ENCODE measurements at regions of chr17 and their contacts with region 1.

Region 1: DNA sequence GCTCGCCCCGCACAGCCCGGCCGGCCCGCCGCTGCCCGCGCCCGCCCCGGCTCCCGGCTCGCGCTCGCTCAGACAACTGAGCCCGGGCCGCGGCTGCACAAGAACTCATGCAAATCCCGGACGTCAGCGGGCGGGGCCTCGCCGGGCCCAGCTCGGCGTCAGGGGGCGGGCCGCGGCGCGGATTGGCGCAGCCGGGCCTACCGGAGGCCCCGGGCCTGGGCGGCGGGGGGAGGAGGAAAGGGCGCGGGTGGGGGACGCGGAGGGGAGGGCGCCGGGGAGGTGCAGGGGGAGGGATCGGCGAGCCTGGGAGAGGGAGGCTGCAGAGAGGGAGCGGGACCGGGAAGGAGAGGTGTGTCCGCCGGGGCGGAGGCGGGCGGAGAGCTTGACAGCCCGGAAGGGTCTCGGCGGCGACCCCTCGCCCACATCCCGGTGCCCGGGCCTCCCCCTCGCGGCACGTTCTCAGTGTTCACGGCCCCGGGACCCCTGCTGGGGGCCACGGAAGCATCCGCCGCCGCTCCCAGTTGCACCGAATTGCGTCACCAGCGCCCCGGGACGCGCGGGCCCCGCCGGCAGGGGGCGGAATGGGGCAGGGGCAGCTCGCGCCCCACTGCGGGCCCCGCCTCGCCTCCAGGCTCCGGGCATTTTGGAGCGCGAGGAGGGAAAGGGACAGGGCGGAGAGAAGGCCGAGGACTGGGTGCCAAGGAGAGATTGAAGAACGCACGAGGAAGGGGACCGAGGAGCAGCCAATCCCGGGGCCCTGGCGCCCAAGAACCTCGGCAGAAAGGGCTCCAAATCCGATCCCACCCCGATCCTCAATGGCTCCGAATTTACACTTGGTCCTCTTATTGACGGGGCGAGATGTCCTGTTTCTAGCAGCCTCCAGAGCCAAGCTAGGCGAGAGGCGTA is at the start of gene CBX4:
- DNase-seq: peak; percentile 91
- ATAC-seq: peak; percentile 24
- H3K4me3 Mint-ChIP-seq: peak within 1 kb of the TSS; percentile 72
- H3K27ac Mint-ChIP-seq: no peak within 1 kb of the TSS; the same call in 1 of the 2 replicates
- H3K4me1 Mint-ChIP-seq: peaks cover 31% of the 10 kb centered on the region
- H3K27me3 Mint-ChIP-seq: peaks cover 89% of the 10 kb centered on the region
- CTCF ChIP-seq: peak; percentile 57
- total RNA-seq, gene CBX4: 3.2 to 3.9 TPM (median 3.3 TPM) in 3 replicates

Region 2: GRCh38 chr17:79747508-79748295 is 91.9 kb before region 1 on chr17:
- CTCF ChIA-PET with region 1: interaction called, 64 read pairs
- POLR2A ChIA-PET with region 1: no interaction called
- DNase-seq: peak; percentile 61
- ATAC-seq: peak; percentile 21; the same call in 1 of the 2 replicates
- H3K4me3 Mint-ChIP-seq: peak overlapping the region; percentile 75
- H3K27ac Mint-ChIP-seq: no peak overlapping the region
- H3K4me1 Mint-ChIP-seq: peaks cover 15% of the 10 kb centered on the region
- H3K27me3 Mint-ChIP-seq: peaks cover 81% of the 10 kb centered on the region
- CTCF ChIP-seq: no peak

Region 3: DNA sequence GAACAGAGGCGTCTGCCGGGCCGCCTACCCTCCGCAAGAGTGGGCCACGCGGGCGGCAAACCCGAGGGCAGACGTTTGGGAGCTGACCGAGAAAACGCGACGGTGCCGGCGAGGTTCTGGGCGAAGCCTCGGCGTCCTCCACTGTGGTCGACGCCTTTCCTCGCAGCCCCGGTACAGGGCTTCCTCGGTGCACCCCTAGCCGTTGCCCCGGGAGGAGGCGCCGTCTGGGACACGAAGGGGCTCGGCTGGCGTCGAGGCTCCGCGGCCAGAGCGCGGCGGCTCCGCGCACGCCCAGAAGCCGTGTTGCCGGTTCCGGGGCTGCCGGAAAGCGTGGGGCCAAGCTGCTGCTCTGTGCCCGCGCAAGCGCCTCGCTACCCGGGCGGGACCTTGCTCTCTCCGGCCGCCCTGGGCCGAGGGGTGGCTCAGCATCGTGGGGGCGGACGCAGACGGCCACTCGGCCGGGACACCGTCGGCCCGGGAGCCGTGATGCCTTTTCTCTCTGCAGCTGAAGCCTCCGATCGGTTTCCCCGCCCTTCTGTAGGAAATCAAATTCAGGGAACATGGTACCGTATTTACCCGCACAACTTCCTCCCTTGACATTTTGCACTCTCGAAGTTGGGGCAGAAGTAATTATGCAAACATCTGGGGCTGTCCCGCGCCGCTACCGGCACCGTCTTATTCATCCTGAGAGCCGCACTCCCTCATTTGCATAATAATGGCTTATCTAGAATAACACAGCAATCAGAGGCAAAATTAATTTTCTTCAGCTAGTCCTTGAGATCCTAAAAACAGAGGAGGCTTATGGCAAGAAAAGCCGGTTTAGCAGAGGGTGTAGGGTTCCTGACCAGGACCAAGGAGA is 35.4 kb before region 1 on chr17:
- CTCF ChIA-PET with region 1: interaction called, 464 read pairs
- POLR2A ChIA-PET with region 1: interaction called, 68 read pairs
- DNase-seq: peak; percentile 50
- ATAC-seq: no peak; the same call in 1 of the 2 replicates
- H3K4me3 Mint-ChIP-seq: peak overlapping the region; percentile 53
- H3K27ac Mint-ChIP-seq: no peak overlapping the region
- H3K4me1 Mint-ChIP-seq: peaks cover 62% of the 10 kb centered on the region
- H3K27me3 Mint-ChIP-seq: peaks cover 100% of the 10 kb centered on the region
- CTCF ChIP-seq: no peak

Region 4: GRCh38 chr17:79862771-79863425 is 23.3 kb after region 1 on chr17:
- CTCF ChIA-PET with region 1: interaction called, 16 read pairs
- POLR2A ChIA-PET with region 1: no interaction called
- DNase-seq: no peak
- ATAC-seq: no peak
- H3K4me3 Mint-ChIP-seq: no peak overlapping the region
- H3K27ac Mint-ChIP-seq: no peak overlapping the region
- H3K4me1 Mint-ChIP-seq: peaks cover 12% of the 10 kb centered on the region
- H3K27me3 Mint-ChIP-seq: no peaks in the 10 kb centered on the region; the same call in 1 of the 2 replicates
- CTCF ChIP-seq: no peak

Region 5: DNA sequence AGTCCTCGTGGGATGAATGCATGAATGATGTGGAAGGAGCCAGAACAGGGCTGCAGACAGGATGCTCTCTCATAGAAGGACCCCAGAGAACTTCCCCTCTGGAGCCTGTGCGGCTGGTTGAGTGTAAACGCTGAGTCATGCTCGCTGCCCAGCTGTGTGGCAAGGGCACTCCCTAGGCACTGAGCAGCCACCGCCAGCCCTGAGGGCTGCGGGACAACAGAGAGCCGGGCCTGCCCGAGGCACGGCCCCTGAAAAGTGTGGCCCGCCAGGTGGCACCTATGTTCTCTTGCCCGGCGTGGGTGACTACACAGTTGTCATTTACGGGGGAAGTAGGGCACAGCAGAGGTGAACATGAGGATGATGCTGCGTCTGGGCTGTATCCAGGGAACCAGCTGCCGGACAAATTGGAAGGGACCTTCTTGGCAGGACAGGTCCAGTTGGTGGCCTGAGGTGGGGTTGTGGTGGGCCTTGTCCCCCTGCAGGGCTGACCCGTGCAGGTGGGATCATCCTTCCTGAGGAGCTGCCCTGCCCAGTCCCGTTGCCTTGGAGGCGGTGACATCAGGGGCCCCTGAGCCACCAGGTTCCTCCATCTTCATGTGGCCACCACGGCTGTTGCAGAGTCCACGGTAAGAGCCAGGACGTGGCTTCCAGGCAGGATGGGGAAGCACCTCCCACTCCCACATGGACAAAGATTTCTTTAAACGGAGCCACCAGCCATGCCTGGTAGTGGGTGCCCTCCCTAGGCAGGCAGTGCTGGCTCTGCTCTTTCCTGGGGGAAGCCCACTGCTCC is 94.4 kb after region 1 on chr17:
- CTCF ChIA-PET with region 1: interaction called, 11 read pairs
- POLR2A ChIA-PET with region 1: interaction called, 4 read pairs
- DNase-seq: no peak
- ATAC-seq: no peak
- H3K4me3 Mint-ChIP-seq: no peak overlapping the region
- H3K27ac Mint-ChIP-seq: peak overlapping the region; percentile 49; the same call in 1 of the 2 replicates
- H3K4me1 Mint-ChIP-seq: peaks cover 77% of the 10 kb centered on the region
- H3K27me3 Mint-ChIP-seq: peaks cover under 1% of the 10 kb centered on the region
- CTCF ChIP-seq: no peak

Region 6: GRCh38 chr17:80101011-80101945 is 261.7 kb after region 1 on chr17 and contains the start of gene GAA:
- CTCF ChIA-PET with region 1: interaction called, 14 read pairs
- POLR2A ChIA-PET with region 1: no interaction called
- DNase-seq: peak; percentile 82
- ATAC-seq: peak; percentile 76
- H3K4me3 Mint-ChIP-seq: peak within 1 kb of the TSS; percentile 92
- H3K27ac Mint-ChIP-seq: peak within 1 kb of the TSS; percentile 68; the same call in 1 of the 2 replicates
- H3K4me1 Mint-ChIP-seq: peaks cover 17% of the 10 kb centered on the region
- H3K27me3 Mint-ChIP-seq: peaks cover 12% of the 10 kb centered on the region
- CTCF ChIP-seq: peak; percentile 65
- total RNA-seq, gene GAA: 91.6 to 97.7 TPM (median 93.9 TPM) in 3 replicates

Measured in WTC11 (cell line).